ENCODE measurements at regions of chr6 and their contacts with region 1.

Region 1: GRCh38 chr6:148457137-148457842 is 114.7 kb downstream of the SASH1 start:
- DNase-seq: peak; percentile 93
- H3K4me3 ChIP-seq: peak overlapping the region in 1 of 3 experiments; percentile 13
- H3K27ac ChIP-seq: peak overlapping the region; percentile 99
- H3K4me1 ChIP-seq: peaks cover 79% of the 10 kb centered on the region
- H3K27me3 ChIP-seq: no peaks in the 10 kb centered on the region
- CTCF ChIP-seq: no peak
- POLR2A ChIP-seq: no peak

Region 2: DNA sequence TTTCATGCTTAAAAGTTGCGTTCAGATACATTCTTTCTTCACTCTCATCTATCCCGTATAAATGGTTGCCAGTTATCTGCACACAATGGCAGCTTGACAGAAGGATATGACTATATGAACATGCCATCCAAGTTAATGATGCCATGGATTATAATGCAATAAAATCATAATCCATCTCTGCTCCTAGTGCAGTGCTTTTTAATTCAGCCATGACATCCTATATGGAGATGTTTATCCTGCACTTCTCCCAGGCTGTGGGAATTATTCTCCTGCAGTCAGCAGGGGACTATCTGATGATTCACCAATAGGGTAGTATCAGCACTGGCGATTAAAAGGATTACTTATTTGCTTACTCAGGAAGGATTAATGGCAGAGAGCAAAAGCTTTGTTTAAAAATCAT is 675.0 kb before region 1 on chr6:
- CTCF ChIA-PET with region 1: no interaction called
- POLR2A ChIA-PET with region 1: no interaction called
- dilution Hi-C with region 1: no loop called
- intact Hi-C with region 1: no loop called
- DNase-seq: peak; percentile 63
- H3K4me3 ChIP-seq: no peak overlapping the region
- H3K27ac ChIP-seq: no peak overlapping the region
- H3K4me1 ChIP-seq: peaks cover 2% of the 10 kb centered on the region
- H3K27me3 ChIP-seq: no peaks in the 10 kb centered on the region
- CTCF ChIP-seq: no peak
- POLR2A ChIP-seq: no peak

Region 3: GRCh38 chr6:148271711-148272439 is 185.4 kb before region 1 on chr6:
- CTCF ChIA-PET with region 1: no interaction called
- POLR2A ChIA-PET with region 1: no interaction called
- dilution Hi-C with region 1: no loop called
- intact Hi-C with region 1: loop called (anchors 2 kb)
- DNase-seq: peak; percentile 89
- H3K4me3 ChIP-seq: peak overlapping the region in 1 of 3 experiments; percentile 45
- H3K27ac ChIP-seq: peak overlapping the region; percentile 93
- H3K4me1 ChIP-seq: peaks cover 47% of the 10 kb centered on the region
- H3K27me3 ChIP-seq: no peaks in the 10 kb centered on the region
- CTCF ChIP-seq: no peak
- POLR2A ChIP-seq: peak; percentile 33

Region 4: DNA sequence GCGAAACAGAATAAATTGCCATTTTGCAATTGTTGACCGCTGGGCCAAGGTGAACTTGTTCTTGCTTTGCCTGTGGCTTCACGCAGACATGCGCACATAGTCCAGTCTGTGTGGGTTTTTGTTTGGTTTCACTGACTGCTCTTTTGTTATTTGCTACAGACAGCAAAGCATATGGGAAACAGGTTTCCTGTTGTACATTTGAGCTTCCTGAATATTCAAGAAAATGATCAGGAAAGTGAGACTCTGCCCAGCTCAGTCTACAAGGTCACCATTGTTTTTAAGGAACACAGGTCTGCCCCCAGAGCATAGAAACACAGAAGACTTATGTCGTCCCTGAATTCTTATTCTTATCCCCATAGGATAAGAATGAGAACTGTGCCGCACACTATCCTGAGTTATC is 59.0 kb before region 1 on chr6:
- CTCF ChIA-PET with region 1: interaction called, 3 read pairs
- POLR2A ChIA-PET with region 1: no interaction called
- dilution Hi-C with region 1: no loop called
- intact Hi-C with region 1: loop called (anchors 1 kb)
- DNase-seq: peak; percentile 95
- H3K4me3 ChIP-seq: peak overlapping the region in 1 of 3 experiments; percentile 3
- H3K27ac ChIP-seq: peak overlapping the region; percentile 98
- H3K4me1 ChIP-seq: peaks cover 41% of the 10 kb centered on the region
- H3K27me3 ChIP-seq: no peaks in the 10 kb centered on the region
- CTCF ChIP-seq: no peak
- POLR2A ChIP-seq: peak; percentile 52

Region 5: GRCh38 chr6:148407372-148407771 is 49.9 kb before region 1 on chr6:
- CTCF ChIA-PET with region 1: interaction called, 7 read pairs
- POLR2A ChIA-PET with region 1: no interaction called
- dilution Hi-C with region 1: no loop called
- intact Hi-C with region 1: loop called (anchors 1 kb)
- DNase-seq: peak; percentile 97
- H3K4me3 ChIP-seq: no peak overlapping the region
- H3K27ac ChIP-seq: peak overlapping the region; percentile 92
- H3K4me1 ChIP-seq: peaks cover 39% of the 10 kb centered on the region
- H3K27me3 ChIP-seq: no peaks in the 10 kb centered on the region
- CTCF ChIP-seq: no peak
- POLR2A ChIP-seq: no peak